ENCODE measurements at regions of chr10 and their contacts with region 1.

Region 1: GRCh38 chr10:112307358-112308124 is 24.3 kb downstream of the TECTB start:
- DNase-seq: peak in 5 of 9 experiments; percentile 5 to 54 (median 17)
- ATAC-seq: no peak
- H3K4me3 ChIP-seq: no peak overlapping the region
- H3K4me3 Mint-ChIP-seq: no peak overlapping the region
- H3K27ac ChIP-seq: no peak overlapping the region
- H3K27ac Mint-ChIP-seq: no peak overlapping the region
- H3K4me1 ChIP-seq: no peaks in the 10 kb centered on the region
- H3K4me1 Mint-ChIP-seq: no peaks in the 10 kb centered on the region
- H3K27me3 ChIP-seq: no peaks in the 10 kb centered on the region
- H3K27me3 Mint-ChIP-seq: peaks cover 14% of the 10 kb centered on the region
- CTCF ChIP-seq: peak; percentile 47

Region 2: DNA sequence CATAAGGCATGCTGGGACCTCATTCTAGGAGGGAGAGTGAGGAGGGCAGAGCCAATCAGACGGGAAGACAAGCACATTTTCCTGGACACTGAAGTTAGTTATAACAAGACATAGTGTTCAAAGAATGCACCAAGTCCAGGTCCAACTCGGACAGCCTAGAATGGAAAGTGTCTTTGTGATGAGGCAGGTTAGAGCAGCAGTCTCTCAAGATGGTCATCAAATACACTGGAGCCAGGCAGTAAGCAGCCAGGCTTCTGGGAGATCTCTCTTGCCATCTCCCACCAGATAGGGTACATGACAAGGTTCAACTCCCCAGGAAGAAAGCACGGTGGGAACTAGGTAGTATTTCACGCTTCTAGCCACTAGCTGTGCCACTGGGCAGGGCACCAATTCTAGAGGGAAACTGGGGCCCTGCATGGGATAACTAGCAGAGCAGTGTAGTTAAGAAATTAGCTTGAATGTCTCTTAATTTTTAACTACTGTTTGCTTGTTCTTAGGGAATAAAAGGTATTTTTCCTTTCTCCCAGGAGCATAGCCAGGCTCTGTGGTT is 116.4 kb before region 1 on chr10:
- CTCF ChIA-PET with region 1: no interaction called
- POLR2A ChIA-PET with region 1: no interaction called
- intact Hi-C with region 1: no loop called
- DNase-seq: no peak
- ATAC-seq: no peak
- H3K4me3 ChIP-seq: no peak overlapping the region
- H3K4me3 Mint-ChIP-seq: no peak overlapping the region
- H3K27ac ChIP-seq: no peak overlapping the region
- H3K27ac Mint-ChIP-seq: no peak overlapping the region
- H3K4me1 ChIP-seq: no peaks in the 10 kb centered on the region
- H3K4me1 Mint-ChIP-seq: no peaks in the 10 kb centered on the region
- H3K27me3 ChIP-seq: no peaks in the 10 kb centered on the region
- H3K27me3 Mint-ChIP-seq: no peaks in the 10 kb centered on the region
- CTCF ChIP-seq: no peak

Region 3: DNA sequence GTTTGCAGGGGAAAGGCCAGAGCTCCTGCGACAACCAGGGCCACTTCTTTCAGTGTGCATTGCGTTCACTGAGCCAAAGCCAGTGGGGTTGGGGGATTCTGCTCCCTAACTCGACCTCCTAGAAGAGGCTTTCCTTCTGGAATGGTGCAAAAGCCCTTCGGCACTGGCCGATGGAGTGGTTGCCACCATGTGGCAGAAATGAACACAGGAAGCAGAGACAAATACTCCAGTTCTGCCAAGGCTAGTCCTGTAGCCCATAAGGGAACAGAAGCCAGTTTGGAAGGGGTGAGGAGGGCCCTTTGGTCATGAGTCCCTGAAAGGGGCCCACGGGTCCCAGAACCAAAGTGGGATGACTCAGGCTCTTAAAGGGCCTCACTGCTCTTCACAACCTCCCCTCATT is 36.7 kb after region 1 on chr10:
- CTCF ChIA-PET with region 1: no interaction called
- POLR2A ChIA-PET with region 1: no interaction called
- intact Hi-C with region 1: no loop called
- DNase-seq: no peak
- ATAC-seq: no peak
- H3K4me3 ChIP-seq: no peak overlapping the region
- H3K4me3 Mint-ChIP-seq: no peak overlapping the region
- H3K27ac ChIP-seq: no peak overlapping the region
- H3K27ac Mint-ChIP-seq: no peak overlapping the region
- H3K4me1 ChIP-seq: no peaks in the 10 kb centered on the region
- H3K4me1 Mint-ChIP-seq: no peaks in the 10 kb centered on the region
- H3K27me3 ChIP-seq: no peaks in the 10 kb centered on the region
- H3K27me3 Mint-ChIP-seq: no peaks in the 10 kb centered on the region
- CTCF ChIP-seq: no peak

Region 4: GRCh38 chr10:112434988-112435619 is 127.6 kb after region 1 on chr10:
- CTCF ChIA-PET with region 1: interaction called, 11 read pairs
- POLR2A ChIA-PET with region 1: no interaction called
- intact Hi-C with region 1: loop called in 1 of 2 experiments (anchors 10 kb)
- DNase-seq: peak in 2 of 9 experiments; percentile 43 to 56
- ATAC-seq: peak; percentile 36
- H3K4me3 ChIP-seq: no peak overlapping the region
- H3K4me3 Mint-ChIP-seq: no peak overlapping the region
- H3K27ac ChIP-seq: no peak overlapping the region
- H3K27ac Mint-ChIP-seq: no peak overlapping the region
- H3K4me1 ChIP-seq: no peaks in the 10 kb centered on the region
- H3K4me1 Mint-ChIP-seq: no peaks in the 10 kb centered on the region
- H3K27me3 ChIP-seq: no peaks in the 10 kb centered on the region
- H3K27me3 Mint-ChIP-seq: no peaks in the 10 kb centered on the region
- CTCF ChIP-seq: peak; percentile 63